ENCODE measurements at regions of chr16 and their contacts with region 1.

Region 1: DNA sequence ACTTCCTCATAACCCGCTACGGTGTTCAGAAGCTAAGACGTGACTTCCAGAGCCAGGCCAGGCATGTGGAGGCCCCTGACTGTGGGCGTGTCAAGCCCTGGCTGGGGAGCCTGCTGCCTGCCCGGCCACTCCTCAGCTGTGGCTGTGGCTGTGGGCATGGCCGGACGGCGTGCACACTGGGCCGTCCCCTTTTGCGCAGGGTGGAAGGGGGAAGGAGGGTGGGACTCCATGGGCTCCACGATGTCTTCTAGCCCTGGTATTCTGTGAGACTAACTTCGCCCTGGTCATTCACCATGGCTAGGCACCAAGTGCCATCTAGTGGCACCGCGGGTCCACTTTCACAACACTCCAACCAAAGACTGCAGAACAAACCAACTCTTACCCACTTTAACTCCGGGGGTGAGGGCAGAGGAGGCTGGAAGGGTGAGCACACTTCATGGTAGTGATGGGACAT is 67.9 kb downstream of the N4BP1 start:
- DNase-seq: no peak
- ATAC-seq: peak; percentile 67
- H3K4me3 Mint-ChIP-seq: no peak overlapping the region
- H3K27ac Mint-ChIP-seq: no peak overlapping the region
- H3K4me1 Mint-ChIP-seq: peaks cover 8% of the 10 kb centered on the region
- H3K27me3 Mint-ChIP-seq: no peaks in the 10 kb centered on the region
- CTCF ChIP-seq: no peak

Region 2: DNA sequence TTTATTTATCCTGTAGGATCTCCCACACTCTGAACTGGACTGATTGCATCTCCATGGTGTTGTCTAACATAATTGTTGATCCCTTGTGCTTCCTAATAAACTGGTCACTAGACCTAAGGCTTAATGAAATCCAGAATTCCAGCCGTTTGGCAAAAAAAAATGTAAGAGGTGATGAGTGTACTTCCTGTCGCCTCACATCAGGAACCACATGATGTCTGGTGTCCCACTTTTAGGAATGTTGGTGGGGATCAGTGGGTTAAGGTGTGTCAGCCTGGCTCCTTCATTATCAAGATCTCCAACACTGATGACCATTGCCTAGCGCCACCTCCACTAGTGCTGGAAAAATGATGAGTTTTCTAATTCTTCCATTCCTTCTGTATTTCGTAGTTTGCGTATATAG is 316.6 kb before region 1 on chr16:
- CTCF ChIA-PET with region 1: no interaction called
- POLR2A ChIA-PET with region 1: no interaction called
- intact Hi-C with region 1: no loop called
- DNase-seq: no peak
- ATAC-seq: no peak
- H3K4me3 Mint-ChIP-seq: no peak overlapping the region
- H3K27ac Mint-ChIP-seq: no peak overlapping the region
- H3K4me1 Mint-ChIP-seq: no peaks in the 10 kb centered on the region
- H3K27me3 Mint-ChIP-seq: peaks cover 13% of the 10 kb centered on the region
- CTCF ChIP-seq: no peak

Region 3: GRCh38 chr16:48244080-48244862 is 297.8 kb before region 1 on chr16 and contains the start of gene LONP2:
- CTCF ChIA-PET with region 1: no interaction called
- POLR2A ChIA-PET with region 1: no interaction called
- intact Hi-C with region 1: loop called (anchors 10 kb)
- DNase-seq: peak; percentile 86
- ATAC-seq: peak; percentile 97
- H3K4me3 Mint-ChIP-seq: peak within 1 kb of the TSS; percentile 91
- H3K27ac Mint-ChIP-seq: peak within 1 kb of the TSS; percentile 90
- H3K4me1 Mint-ChIP-seq: peaks cover 34% of the 10 kb centered on the region
- H3K27me3 Mint-ChIP-seq: no peaks in the 10 kb centered on the region
- CTCF ChIP-seq: no peak
- total RNA-seq, gene LONP2: 63.5 and 72.7 TPM in 2 replicates

Region 4: DNA sequence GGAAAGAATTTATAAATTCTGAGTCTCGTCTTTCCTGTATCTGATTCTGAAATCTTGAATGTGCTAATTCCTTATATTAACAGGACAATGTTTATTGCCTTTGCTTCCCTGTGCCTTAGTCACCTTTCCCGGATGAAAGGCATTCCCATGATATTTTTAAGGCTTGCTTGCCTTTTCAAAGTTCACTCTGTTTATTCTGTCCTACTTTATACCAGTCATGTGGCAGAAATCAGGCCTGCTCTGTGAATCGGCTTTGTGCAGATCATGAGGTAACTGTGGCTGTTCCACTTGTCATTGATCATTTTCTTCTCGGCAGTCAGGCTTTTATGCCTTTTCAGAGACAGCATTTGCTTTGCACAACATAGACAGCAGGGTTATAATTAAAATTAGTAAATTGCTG is 265.9 kb before region 1 on chr16:
- CTCF ChIA-PET with region 1: no interaction called
- POLR2A ChIA-PET with region 1: no interaction called
- intact Hi-C with region 1: loop called (anchors 10 kb)
- DNase-seq: no peak
- ATAC-seq: no peak
- H3K4me3 Mint-ChIP-seq: no peak overlapping the region
- H3K27ac Mint-ChIP-seq: no peak overlapping the region
- H3K4me1 Mint-ChIP-seq: no peaks in the 10 kb centered on the region
- H3K27me3 Mint-ChIP-seq: no peaks in the 10 kb centered on the region
- CTCF ChIP-seq: no peak

Region 5: GRCh38 chr16:48353565-48354163 is 188.4 kb before region 1 on chr16:
- CTCF ChIA-PET with region 1: interaction called, 14 read pairs
- POLR2A ChIA-PET with region 1: interaction called, 3 read pairs
- intact Hi-C with region 1: loop called (anchors 1 kb)
- DNase-seq: no peak
- ATAC-seq: peak; percentile 93
- H3K4me3 Mint-ChIP-seq: no peak overlapping the region
- H3K27ac Mint-ChIP-seq: peak overlapping the region; percentile 5
- H3K4me1 Mint-ChIP-seq: peaks cover 28% of the 10 kb centered on the region
- H3K27me3 Mint-ChIP-seq: no peaks in the 10 kb centered on the region
- CTCF ChIP-seq: peak; percentile 53

Region 6: DNA sequence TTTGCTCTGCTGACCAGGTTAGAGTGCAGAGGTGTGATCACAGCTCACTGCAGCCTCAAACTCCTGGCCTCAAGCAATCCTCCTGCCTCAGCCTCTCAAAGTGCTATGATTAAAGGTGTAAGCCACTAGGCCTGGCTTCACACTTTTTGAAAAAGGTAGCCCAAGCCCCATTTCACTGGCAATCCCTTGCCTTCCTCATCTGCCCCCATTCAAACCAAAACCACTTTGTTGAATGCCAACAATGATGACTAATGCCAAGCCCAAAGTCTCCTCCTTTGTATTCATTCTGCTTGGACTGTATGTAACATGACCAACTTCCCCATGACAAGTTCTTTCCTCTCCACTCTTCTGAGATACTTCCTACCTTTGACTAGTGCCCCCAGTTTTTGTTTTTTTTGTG is 34.9 kb after region 1 on chr16:
- CTCF ChIA-PET with region 1: no interaction called
- POLR2A ChIA-PET with region 1: no interaction called
- intact Hi-C with region 1: no loop called
- DNase-seq: no peak
- ATAC-seq: no peak
- H3K4me3 Mint-ChIP-seq: no peak overlapping the region
- H3K27ac Mint-ChIP-seq: no peak overlapping the region
- H3K4me1 Mint-ChIP-seq: peaks cover 49% of the 10 kb centered on the region
- H3K27me3 Mint-ChIP-seq: no peaks in the 10 kb centered on the region
- CTCF ChIP-seq: no peak

Measured in activated B cell treated with CpG ODN at 0.5 μM for 24 hours (primary cell).